GM12878 (cell line): ENCODE measurements at regions of chr15 and their contacts with region 1.

Region 1: GRCh38 chr15:43370975-43371974 is at the starts of genes TUBGCP4 and ZSCAN29:
- DNase-seq: peak; percentile 34
- ATAC-seq: peak; percentile 91
- H3K4me3 ChIP-seq: peak within 1 kb of the TSS; percentile 97
- H3K27ac ChIP-seq: peak within 1 kb of the TSS; percentile 76
- H3K4me1 ChIP-seq: peaks cover 8% of the 10 kb centered on the region
- H3K27me3 ChIP-seq: no peaks in the 10 kb centered on the region
- CTCF ChIP-seq: peak; percentile 47 to 69 (median 49); a peak in 5 of 6 replicates
- EP300 ChIP-seq: no peak
- POLR2A ChIP-seq: peak; percentile 92
- RAD21 ChIP-seq: no peak
- polyA plus RNA-seq, gene TUBGCP4: 6.3 to 8.0 TPM
- polyA plus RNA-seq, gene ZSCAN29: 1.7 to 2.3 TPM

Region 2: GRCh38 chr15:43352693-43353382 is 18.4 kb before region 1 on chr15:
- CTCF ChIA-PET with region 1: interaction called, 10 read pairs
- POLR2A ChIA-PET with region 1: interaction called, 6 read pairs
- RAD21 ChIA-PET with region 1: no interaction called
- SMC1A ChIA-PET with region 1: interaction called, 4 read pairs
- in situ Hi-C with region 1: no loop called
- intact Hi-C with region 1: no loop called
- DNase-seq: no peak
- ATAC-seq: no peak
- H3K4me3 ChIP-seq: no peak overlapping the region
- H3K27ac ChIP-seq: no peak overlapping the region
- H3K4me1 ChIP-seq: no peaks in the 10 kb centered on the region
- H3K27me3 ChIP-seq: no peaks in the 10 kb centered on the region
- CTCF ChIP-seq: no peak
- EP300 ChIP-seq: no peak
- POLR2A ChIP-seq: no peak
- RAD21 ChIP-seq: no peak

Region 3: GRCh38 chr15:43383070-43383469 is 11.8 kb after region 1 on chr15:
- CTCF ChIA-PET with region 1: interaction called, 57 read pairs
- POLR2A ChIA-PET with region 1: interaction called, 4 read pairs
- RAD21 ChIA-PET with region 1: interaction called, 4 read pairs
- SMC1A ChIA-PET with region 1: interaction called, 3 read pairs
- in situ Hi-C with region 1: no loop called
- intact Hi-C with region 1: no loop called
- DNase-seq: no peak
- ATAC-seq: no peak
- H3K4me3 ChIP-seq: no peak overlapping the region
- H3K27ac ChIP-seq: no peak overlapping the region
- H3K4me1 ChIP-seq: no peaks in the 10 kb centered on the region; the same call in 1 of the 2 replicates
- H3K27me3 ChIP-seq: no peaks in the 10 kb centered on the region
- CTCF ChIP-seq: no peak
- EP300 ChIP-seq: no peak
- POLR2A ChIP-seq: no peak
- RAD21 ChIP-seq: no peak

Region 4: DNA sequence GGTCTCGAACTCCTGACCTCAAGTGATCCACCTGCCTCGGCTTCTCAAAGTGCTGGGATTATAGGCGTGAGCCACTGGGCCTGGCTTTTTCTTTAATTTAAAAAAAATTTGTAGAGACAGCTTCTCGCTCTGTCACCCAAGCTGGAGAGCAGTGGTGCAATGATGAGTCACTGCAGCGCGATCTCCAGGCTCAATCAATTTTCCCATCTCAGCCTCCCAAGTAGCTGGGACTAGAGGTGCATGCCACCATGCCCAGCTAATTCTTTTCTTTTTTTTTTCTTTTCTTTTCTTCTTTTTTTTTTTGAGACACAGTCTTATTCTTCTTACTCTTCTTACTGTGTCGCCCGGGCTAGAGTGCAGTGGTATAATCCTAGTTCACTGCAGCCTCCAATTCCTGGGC is 19.4 kb after region 1 on chr15:
- CTCF ChIA-PET with region 1: interaction called, 14 read pairs
- POLR2A ChIA-PET with region 1: interaction called, 4 read pairs
- RAD21 ChIA-PET with region 1: interaction called, 3 read pairs
- SMC1A ChIA-PET with region 1: interaction called, 3 read pairs
- in situ Hi-C with region 1: no loop called
- intact Hi-C with region 1: no loop called
- DNase-seq: no peak
- ATAC-seq: no peak
- H3K4me3 ChIP-seq: no peak overlapping the region
- H3K27ac ChIP-seq: no peak overlapping the region
- H3K4me1 ChIP-seq: no peaks in the 10 kb centered on the region
- H3K27me3 ChIP-seq: no peaks in the 10 kb centered on the region
- CTCF ChIP-seq: no peak
- EP300 ChIP-seq: no peak
- POLR2A ChIP-seq: no peak
- RAD21 ChIP-seq: no peak

Region 5: GRCh38 chr15:43434446-43434845 is 63.2 kb after region 1 on chr15:
- CTCF ChIA-PET with region 1: no interaction called
- POLR2A ChIA-PET with region 1: no interaction called
- RAD21 ChIA-PET with region 1: no interaction called
- SMC1A ChIA-PET with region 1: no interaction called
- in situ Hi-C with region 1: no loop called
- intact Hi-C with region 1: no loop called
- DNase-seq: no peak
- ATAC-seq: no peak
- H3K4me3 ChIP-seq: no peak overlapping the region
- H3K27ac ChIP-seq: no peak overlapping the region
- H3K4me1 ChIP-seq: no peaks in the 10 kb centered on the region
- H3K27me3 ChIP-seq: no peaks in the 10 kb centered on the region
- CTCF ChIP-seq: no peak
- EP300 ChIP-seq: no peak
- POLR2A ChIP-seq: no peak
- RAD21 ChIP-seq: no peak

Region 6: GRCh38 chr15:43524254-43524845 is 153.1 kb after region 1 on chr15:
- CTCF ChIA-PET with region 1: no interaction called
- POLR2A ChIA-PET with region 1: no interaction called
- RAD21 ChIA-PET with region 1: no interaction called
- SMC1A ChIA-PET with region 1: no interaction called
- in situ Hi-C with region 1: no loop called
- intact Hi-C with region 1: no loop called
- DNase-seq: no peak
- ATAC-seq: peak; percentile 38
- H3K4me3 ChIP-seq: no peak overlapping the region
- H3K27ac ChIP-seq: no peak overlapping the region
- H3K4me1 ChIP-seq: no peaks in the 10 kb centered on the region
- H3K27me3 ChIP-seq: peaks cover 0 to 2% of the 10 kb centered on the region in 2 experiments; a peak in 2 of 4 replicates
- CTCF ChIP-seq: peak in 1 of 3 experiments; percentile 10; a peak in 1 of 6 replicates
- EP300 ChIP-seq: no peak
- POLR2A ChIP-seq: no peak
- RAD21 ChIP-seq: no peak